ENCODE measurements at regions of chr5 and their contacts with region 1.

Region 1: GRCh38 chr5:141968914-141969608 is at the start of gene RNF14:
- DNase-seq: peak; percentile 95
- H3K4me3 Mint-ChIP-seq: peak within 1 kb of the TSS; percentile 98
- H3K27ac Mint-ChIP-seq: peak within 1 kb of the TSS; percentile 99
- H3K4me1 Mint-ChIP-seq: peaks cover 39% of the 10 kb centered on the region
- H3K27me3 Mint-ChIP-seq: no peaks in the 10 kb centered on the region
- total RNA-seq, gene RNF14: 28.8 to 33.7 TPM

Region 2: GRCh38 chr5:141691867-141692532 is 277.1 kb before region 1 on chr5:
- CTCF ChIA-PET with region 1: interaction called, 30 read pairs
- POLR2A ChIA-PET with region 1: interaction called, 3 read pairs
- DNase-seq: peak; percentile 85
- H3K4me3 Mint-ChIP-seq: peak overlapping the region; percentile 55
- H3K27ac Mint-ChIP-seq: peak overlapping the region; percentile 54
- H3K4me1 Mint-ChIP-seq: peaks cover 31% of the 10 kb centered on the region
- H3K27me3 Mint-ChIP-seq: peaks cover 28% of the 10 kb centered on the region

Region 3: DNA sequence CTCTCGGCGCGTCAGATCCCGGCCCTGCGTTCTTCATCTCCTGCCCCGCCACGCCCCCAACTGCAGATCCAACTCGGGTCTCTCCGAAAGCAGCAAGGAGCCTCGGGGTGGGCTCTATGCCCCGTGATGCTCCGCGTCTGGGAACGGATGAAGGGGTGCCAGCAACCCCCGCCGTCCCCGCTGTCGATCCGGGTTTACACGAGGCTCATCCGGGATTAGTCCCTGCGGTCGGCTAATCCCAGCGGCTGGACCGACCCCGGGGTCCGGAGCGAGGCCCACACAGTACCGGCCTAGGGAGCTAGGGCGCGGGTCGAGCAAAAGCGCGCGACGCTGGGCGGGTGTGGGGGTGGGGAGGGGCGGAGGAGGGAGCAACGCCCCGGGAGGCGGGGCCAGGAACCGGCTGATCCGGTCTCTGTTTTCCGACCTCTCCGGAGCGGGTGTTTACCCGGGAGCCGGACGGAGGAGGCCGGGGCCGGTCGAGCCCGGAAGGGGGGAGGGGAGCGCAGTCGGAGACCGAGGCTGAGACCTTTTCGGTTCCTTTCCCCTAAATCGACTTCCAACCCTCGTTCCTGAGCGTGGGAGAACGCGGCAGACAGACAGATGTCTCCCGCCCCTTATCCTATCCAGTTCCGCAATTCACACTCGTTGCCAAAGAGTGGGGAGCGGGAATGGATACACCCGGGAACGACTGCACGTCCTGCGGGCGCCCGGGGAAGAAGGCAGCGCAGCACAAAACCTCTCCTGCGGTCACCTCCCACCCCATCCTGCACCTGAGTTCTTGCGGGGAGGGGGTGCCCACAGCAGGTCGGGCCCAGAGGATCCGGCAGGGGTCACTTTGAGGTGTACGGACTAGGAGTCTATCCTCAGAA is 119.5 kb before region 1 on chr5:
- CTCF ChIA-PET with region 1: no interaction called
- POLR2A ChIA-PET with region 1: no interaction called
- DNase-seq: peak; percentile 76
- H3K4me3 Mint-ChIP-seq: peak overlapping the region; percentile 84
- H3K27ac Mint-ChIP-seq: peak overlapping the region; percentile 93
- H3K4me1 Mint-ChIP-seq: peaks cover 17% of the 10 kb centered on the region
- H3K27me3 Mint-ChIP-seq: peaks cover 2% of the 10 kb centered on the region

Region 4: GRCh38 chr5:141923448-141924352 is 45.4 kb before region 1 on chr5 and contains the start of gene DELE1:
- CTCF ChIA-PET with region 1: interaction called, 14 read pairs
- POLR2A ChIA-PET with region 1: interaction called, 4 read pairs
- DNase-seq: peak; percentile 94
- H3K4me3 Mint-ChIP-seq: peak within 1 kb of the TSS; percentile 87
- H3K27ac Mint-ChIP-seq: peak within 1 kb of the TSS; percentile 88
- H3K4me1 Mint-ChIP-seq: peaks cover 35% of the 10 kb centered on the region
- H3K27me3 Mint-ChIP-seq: no peaks in the 10 kb centered on the region
- total RNA-seq, gene DELE1: 71.5 to 72.1 TPM

Region 5: DNA sequence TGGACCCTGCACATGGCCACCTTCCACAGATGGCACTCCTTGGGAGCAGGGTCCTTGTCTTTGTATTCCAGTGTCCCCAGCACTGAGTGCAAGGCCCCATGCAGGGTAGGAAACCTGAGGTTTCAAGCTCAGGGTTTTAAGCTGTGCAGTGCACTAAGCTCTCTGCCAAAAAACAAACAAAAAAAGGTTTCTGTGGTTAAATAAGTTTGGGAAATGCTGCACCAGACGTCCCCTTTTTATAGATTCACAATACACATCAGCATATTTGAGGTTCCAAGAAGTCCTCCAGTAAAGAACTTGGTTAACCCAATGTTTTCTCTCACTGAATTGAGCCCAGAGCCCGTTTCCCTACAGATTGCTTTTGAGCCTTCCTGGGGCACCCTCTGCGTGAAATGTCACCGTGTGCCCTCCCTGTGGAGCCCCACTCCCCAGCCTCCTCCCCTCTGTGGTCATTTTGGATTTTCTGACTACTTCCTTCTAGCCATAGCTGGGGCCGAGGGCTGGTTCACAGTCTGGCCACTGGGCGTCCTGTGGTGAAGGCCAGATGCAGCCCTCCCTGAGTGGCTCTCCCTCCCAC is 28.3 kb before region 1 on chr5:
- CTCF ChIA-PET with region 1: interaction called, 11 read pairs
- POLR2A ChIA-PET with region 1: no interaction called
- DNase-seq: no peak
- H3K4me3 Mint-ChIP-seq: no peak overlapping the region
- H3K27ac Mint-ChIP-seq: peak overlapping the region; percentile 66
- H3K4me1 Mint-ChIP-seq: peaks cover 12% of the 10 kb centered on the region
- H3K27me3 Mint-ChIP-seq: no peaks in the 10 kb centered on the region

Region 6: GRCh38 chr5:141986072-141986471 is 17.0 kb after region 1 on chr5:
- CTCF ChIA-PET with region 1: interaction called, 10 read pairs
- POLR2A ChIA-PET with region 1: no interaction called
- DNase-seq: no peak
- H3K4me3 Mint-ChIP-seq: no peak overlapping the region
- H3K27ac Mint-ChIP-seq: no peak overlapping the region
- H3K4me1 Mint-ChIP-seq: no peaks in the 10 kb centered on the region
- H3K27me3 Mint-ChIP-seq: no peaks in the 10 kb centered on the region

Region 7: DNA sequence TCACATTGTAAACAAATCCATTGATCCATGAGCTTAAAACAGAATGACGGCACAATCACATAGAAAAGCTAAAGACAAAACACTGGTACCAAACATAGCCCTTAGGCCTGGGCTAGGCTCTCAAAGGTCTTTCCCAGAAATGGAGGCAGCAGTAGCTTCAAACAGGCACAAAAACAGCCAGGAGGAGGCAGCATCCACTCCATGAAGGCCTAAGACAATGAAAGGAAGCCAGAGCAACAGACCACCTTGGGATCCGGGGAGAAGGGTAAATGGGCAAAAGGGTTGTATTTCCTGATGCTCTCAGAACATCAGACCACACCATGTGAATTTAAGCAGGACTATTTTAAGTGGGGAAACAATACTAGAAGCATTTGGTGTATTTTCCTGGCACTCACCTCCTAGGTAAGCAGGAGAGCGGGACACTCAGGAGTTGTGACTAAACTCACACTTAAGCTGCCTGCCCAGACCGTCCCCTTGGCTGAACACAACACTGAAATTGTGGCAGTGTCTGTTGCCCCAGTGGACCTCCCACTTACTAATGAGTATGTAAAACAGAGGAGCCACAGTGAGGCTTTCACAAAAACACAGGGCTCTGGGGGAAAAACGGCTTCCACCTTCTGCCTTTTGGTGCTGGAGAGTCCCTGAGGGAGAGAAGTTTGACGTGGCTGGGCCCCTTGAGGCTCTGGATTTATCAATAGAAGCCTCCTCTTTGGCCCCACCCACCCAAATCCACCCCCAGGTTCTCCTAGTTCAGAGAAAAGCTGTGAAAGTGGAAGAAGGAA is 31.8 kb after region 1 on chr5:
- CTCF ChIA-PET with region 1: no interaction called
- POLR2A ChIA-PET with region 1: no interaction called
- DNase-seq: peak; percentile 26
- H3K4me3 Mint-ChIP-seq: no peak overlapping the region
- H3K27ac Mint-ChIP-seq: no peak overlapping the region
- H3K4me1 Mint-ChIP-seq: peaks cover 41% of the 10 kb centered on the region
- H3K27me3 Mint-ChIP-seq: no peaks in the 10 kb centered on the region

Region 8: DNA sequence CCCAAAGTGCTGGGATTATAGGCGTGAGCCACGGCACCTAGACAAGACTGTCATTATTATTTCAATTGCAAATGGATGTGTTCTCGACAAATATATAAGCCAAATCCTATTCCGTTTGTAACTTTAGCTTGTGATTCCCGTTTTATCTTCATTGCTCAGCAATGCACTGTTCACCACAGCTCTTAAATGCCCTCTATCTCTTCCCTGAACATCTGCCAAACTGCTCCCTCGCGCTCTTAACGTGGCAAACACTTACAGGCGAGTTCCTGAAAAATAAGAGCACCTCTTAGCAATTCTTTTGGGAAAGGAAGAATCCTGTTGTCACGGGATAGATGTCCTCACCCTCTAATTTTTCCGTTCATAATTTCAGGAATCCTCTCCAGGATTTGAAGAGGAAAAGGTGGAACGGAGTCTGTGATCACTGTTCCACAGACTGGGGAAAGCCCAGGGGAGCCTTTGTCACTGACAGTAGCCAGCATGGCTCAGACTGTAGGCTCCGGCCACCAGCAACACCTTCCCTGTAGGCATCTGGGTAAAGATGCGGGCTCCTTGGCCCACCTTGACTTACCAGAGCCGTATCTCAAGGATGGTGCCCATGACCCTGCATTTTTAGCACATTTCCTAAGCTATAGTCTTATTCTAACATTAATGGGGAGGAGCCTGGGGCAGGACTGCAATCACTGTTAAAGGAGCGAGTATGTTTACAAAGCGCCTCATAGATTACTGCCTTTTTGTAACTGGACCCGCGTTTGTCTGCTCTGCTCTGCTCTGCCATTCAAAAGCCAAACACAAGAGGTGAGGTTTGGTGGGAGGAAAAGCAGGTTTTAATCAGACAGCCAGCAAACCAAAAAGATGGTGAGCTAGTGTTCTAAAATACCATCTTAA is 63.9 kb after region 1 on chr5:
- CTCF ChIA-PET with region 1: no interaction called
- POLR2A ChIA-PET with region 1: no interaction called
- DNase-seq: no peak
- H3K4me3 Mint-ChIP-seq: no peak overlapping the region
- H3K27ac Mint-ChIP-seq: no peak overlapping the region
- H3K4me1 Mint-ChIP-seq: peaks cover 20% of the 10 kb centered on the region
- H3K27me3 Mint-ChIP-seq: no peaks in the 10 kb centered on the region

Measured in activated CD4-positive, alpha-beta T cell treated with anti-CD3 and anti-CD28 coated beads, Interleukin-2, amount 10 ng/mL, durations not matched to agents 7 days and 5 days (primary cell).